Activated B cell treated with CpG ODN at 0.5 μM for 24 hours (primary cell): ENCODE measurements at regions of chr13 and their contacts with region 1.

Region 1: GRCh38 chr13:66994097-66994496 is 236.0 kb downstream of the PCDH9 start:
- DNase-seq: peak; percentile 31
- ATAC-seq: peak; percentile 87
- H3K4me3 Mint-ChIP-seq: peak overlapping the region; percentile 52
- H3K27ac Mint-ChIP-seq: peak overlapping the region; percentile 89
- H3K4me1 Mint-ChIP-seq: peaks cover 42% of the 10 kb centered on the region
- H3K27me3 Mint-ChIP-seq: no peaks in the 10 kb centered on the region
- CTCF ChIP-seq: no peak

Region 2: GRCh38 chr13:66138172-66138811 is 855.8 kb before region 1 on chr13:
- CTCF ChIA-PET with region 1: no interaction called
- POLR2A ChIA-PET with region 1: no interaction called
- intact Hi-C with region 1: loop called (anchors 10 kb)
- DNase-seq: no peak
- ATAC-seq: peak; percentile 87
- H3K4me3 Mint-ChIP-seq: peak overlapping the region; percentile 39
- H3K27ac Mint-ChIP-seq: peak overlapping the region; percentile 54
- H3K4me1 Mint-ChIP-seq: peaks cover 29% of the 10 kb centered on the region
- H3K27me3 Mint-ChIP-seq: no peaks in the 10 kb centered on the region
- CTCF ChIP-seq: no peak

Region 3: GRCh38 chr13:66506979-66507378 is 487.1 kb before region 1 on chr13:
- CTCF ChIA-PET with region 1: no interaction called
- POLR2A ChIA-PET with region 1: no interaction called
- intact Hi-C with region 1: loop called (anchors 10 kb)
- DNase-seq: no peak
- ATAC-seq: no peak
- H3K4me3 Mint-ChIP-seq: no peak overlapping the region
- H3K27ac Mint-ChIP-seq: no peak overlapping the region
- H3K4me1 Mint-ChIP-seq: peaks cover 2% of the 10 kb centered on the region
- H3K27me3 Mint-ChIP-seq: no peaks in the 10 kb centered on the region
- CTCF ChIP-seq: no peak

Region 4: GRCh38 chr13:66618702-66619101 is 375.4 kb before region 1 on chr13:
- CTCF ChIA-PET with region 1: interaction called, 4 read pairs
- POLR2A ChIA-PET with region 1: no interaction called
- intact Hi-C with region 1: loop called (anchors 2 kb)
- DNase-seq: no peak
- ATAC-seq: peak; percentile 56
- H3K4me3 Mint-ChIP-seq: no peak overlapping the region
- H3K27ac Mint-ChIP-seq: no peak overlapping the region
- H3K4me1 Mint-ChIP-seq: no peaks in the 10 kb centered on the region
- H3K27me3 Mint-ChIP-seq: no peaks in the 10 kb centered on the region
- CTCF ChIP-seq: no peak

Region 5: GRCh38 chr13:66765559-66765958 is 228.5 kb before region 1 on chr13:
- CTCF ChIA-PET with region 1: no interaction called
- POLR2A ChIA-PET with region 1: no interaction called
- intact Hi-C with region 1: no loop called
- DNase-seq: no peak
- ATAC-seq: no peak
- H3K4me3 Mint-ChIP-seq: no peak overlapping the region
- H3K27ac Mint-ChIP-seq: no peak overlapping the region
- H3K4me1 Mint-ChIP-seq: no peaks in the 10 kb centered on the region
- H3K27me3 Mint-ChIP-seq: no peaks in the 10 kb centered on the region
- CTCF ChIP-seq: no peak

Region 6: GRCh38 chr13:66887088-66887487 is 107.0 kb before region 1 on chr13:
- CTCF ChIA-PET with region 1: interaction called, 3 read pairs
- POLR2A ChIA-PET with region 1: no interaction called
- intact Hi-C with region 1: loop called (anchors 5 kb)
- DNase-seq: no peak
- ATAC-seq: peak; percentile 84
- H3K4me3 Mint-ChIP-seq: peak overlapping the region; percentile 56
- H3K27ac Mint-ChIP-seq: peak overlapping the region; percentile 31
- H3K4me1 Mint-ChIP-seq: peaks cover 41% of the 10 kb centered on the region
- H3K27me3 Mint-ChIP-seq: no peaks in the 10 kb centered on the region
- CTCF ChIP-seq: no peak

Region 7: GRCh38 chr13:67230404-67231288 is 236.5 kb after region 1 on chr13:
- CTCF ChIA-PET with region 1: no interaction called
- POLR2A ChIA-PET with region 1: interaction called, 4 read pairs
- intact Hi-C with region 1: loop called (anchors 2 kb)
- DNase-seq: peak; percentile 84
- ATAC-seq: peak; percentile 94
- H3K4me3 Mint-ChIP-seq: no peak overlapping the region
- H3K27ac Mint-ChIP-seq: peak overlapping the region; percentile 78
- H3K4me1 Mint-ChIP-seq: peaks cover 19% of the 10 kb centered on the region
- H3K27me3 Mint-ChIP-seq: peaks cover 6% of the 10 kb centered on the region
- CTCF ChIP-seq: no peak